Prostate gland (tissue), 2 donors: ENCODE measurements at regions of chr9 and their contacts with region 1.

Region 1: GRCh38 chr9:75088260-75088905 is at the start of gene OSTF1:
- DNase-seq: peak; percentile 95
- H3K4me3 ChIP-seq: peak within 1 kb of the TSS; percentile 77 to 82
- H3K27ac ChIP-seq: peak within 1 kb of the TSS; percentile 97 to 99
- H3K4me1 ChIP-seq: no peaks in the 10 kb centered on the region
- H3K27me3 ChIP-seq: no peaks in the 10 kb centered on the region
- CTCF ChIP-seq: peak in 1 of 4 experiments; percentile 7
- POLR2A ChIP-seq: peak; percentile 92
- total RNA-seq, gene OSTF1: 24.5 to 35.8 TPM

Region 2: DNA sequence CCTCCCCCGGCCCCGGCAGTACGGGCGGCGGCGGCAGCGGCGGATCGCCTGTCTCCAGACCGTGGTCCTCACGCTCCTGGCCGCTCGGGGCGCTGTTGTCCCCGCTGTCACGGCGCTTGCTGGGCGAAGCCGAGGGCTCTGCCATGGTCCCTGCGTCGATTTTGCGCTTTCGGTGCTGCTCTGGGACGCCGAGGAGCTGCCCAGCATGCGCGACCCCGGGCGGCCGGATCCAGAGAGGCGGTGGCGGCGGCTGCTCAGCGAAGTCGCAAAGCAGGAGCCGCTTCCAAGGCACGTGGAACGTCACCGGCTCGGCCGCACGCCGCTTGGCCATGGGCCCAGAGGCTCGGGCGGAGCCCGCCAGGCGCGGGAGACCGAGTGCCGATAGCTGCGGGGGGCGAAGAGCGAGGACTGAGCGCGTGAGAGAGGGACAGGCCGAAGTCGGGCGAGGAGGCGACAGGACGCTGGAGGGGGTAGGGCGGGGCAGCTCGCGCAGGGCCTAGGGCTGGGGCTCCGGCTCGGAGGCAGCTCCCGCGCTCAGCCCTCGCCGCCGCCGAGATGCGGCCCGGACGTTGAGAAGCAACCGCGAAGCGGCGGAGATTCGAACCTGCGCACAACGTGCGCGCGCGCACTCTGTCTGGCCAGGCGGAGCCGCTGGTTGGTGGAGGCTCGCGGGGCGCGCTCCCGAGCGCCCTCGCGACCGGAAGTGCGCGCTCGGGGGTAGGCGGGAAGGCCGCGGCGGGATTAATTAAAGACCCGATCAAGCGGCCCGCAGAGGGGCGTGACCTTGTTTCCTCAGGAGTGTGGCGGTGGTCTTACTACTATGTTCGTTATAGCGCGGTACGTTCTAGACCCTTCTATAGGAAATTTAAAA is 135.9 kb before region 1 on chr9 and contains the start of gene C9orf40:
- intact Hi-C with region 1: loop called (anchors 2 kb)
- DNase-seq: peak; percentile 84
- H3K4me3 ChIP-seq: peak within 1 kb of the TSS; percentile 75 to 91
- H3K27ac ChIP-seq: peak within 1 kb of the TSS; percentile 91 to 94
- H3K4me1 ChIP-seq: no peaks in the 10 kb centered on the region
- H3K27me3 ChIP-seq: no peaks in the 10 kb centered on the region
- CTCF ChIP-seq: peak; percentile 49 to 86 (median 76)
- POLR2A ChIP-seq: peak; percentile 4
- total RNA-seq, gene C9orf40: 2.5 to 4.4 TPM

Region 3: DNA sequence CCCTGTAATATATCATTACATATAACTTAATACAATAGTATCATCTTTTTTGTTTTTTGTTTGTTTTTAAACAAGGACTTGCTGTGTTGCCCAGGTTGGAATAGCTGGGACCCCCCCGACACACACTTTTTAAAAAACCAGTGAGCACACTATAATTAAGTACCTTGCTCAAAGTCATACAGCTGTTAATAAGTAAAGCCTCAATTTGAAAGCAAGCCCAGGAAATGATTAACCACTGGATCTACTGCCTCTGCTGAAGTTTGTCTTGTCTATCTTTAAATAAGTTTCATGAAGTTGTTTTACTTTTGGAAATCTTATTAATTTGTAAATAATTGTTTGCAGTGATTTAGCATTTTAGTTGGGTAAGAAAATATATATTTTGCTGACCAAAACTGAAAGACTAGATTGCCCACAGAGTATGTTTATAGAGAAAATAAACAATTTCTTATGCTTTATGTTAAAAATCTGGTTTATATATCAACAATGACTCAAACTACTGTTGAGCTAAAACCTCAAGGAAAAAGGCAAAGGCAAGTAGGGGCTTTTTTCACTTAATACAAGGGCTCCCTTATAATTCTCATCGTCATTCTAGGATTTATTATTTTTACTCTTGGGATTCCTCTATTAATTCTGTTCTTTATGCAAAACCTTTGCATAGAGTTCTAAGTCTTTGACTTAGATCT is 54.5 kb before region 1 on chr9:
- intact Hi-C with region 1: no loop called
- DNase-seq: no peak
- H3K4me3 ChIP-seq: no peak overlapping the region
- H3K27ac ChIP-seq: no peak overlapping the region
- H3K4me1 ChIP-seq: no peaks in the 10 kb centered on the region
- H3K27me3 ChIP-seq: no peaks in the 10 kb centered on the region
- CTCF ChIP-seq: no peak
- POLR2A ChIP-seq: no peak